GM12878 (cell line): ENCODE measurements at regions of chr3 and their contacts with region 1.

Region 1: GRCh38 chr3:61181874-61182273 is 69.4 kb downstream of the FHIT start:
- DNase-seq: peak; percentile 64
- ATAC-seq: peak; percentile 97
- H3K4me3 ChIP-seq: no peak overlapping the region
- H3K27ac ChIP-seq: no peak overlapping the region; the same call in 1 of the 2 replicates
- H3K4me1 ChIP-seq: peaks cover 20% of the 10 kb centered on the region
- H3K27me3 ChIP-seq: no peaks in the 10 kb centered on the region
- CTCF ChIP-seq: no peak
- EP300 ChIP-seq: peak; percentile 60 to 75; a peak in 3 of 4 replicates
- POLR2A ChIP-seq: no peak
- RAD21 ChIP-seq: no peak

Region 2: DNA sequence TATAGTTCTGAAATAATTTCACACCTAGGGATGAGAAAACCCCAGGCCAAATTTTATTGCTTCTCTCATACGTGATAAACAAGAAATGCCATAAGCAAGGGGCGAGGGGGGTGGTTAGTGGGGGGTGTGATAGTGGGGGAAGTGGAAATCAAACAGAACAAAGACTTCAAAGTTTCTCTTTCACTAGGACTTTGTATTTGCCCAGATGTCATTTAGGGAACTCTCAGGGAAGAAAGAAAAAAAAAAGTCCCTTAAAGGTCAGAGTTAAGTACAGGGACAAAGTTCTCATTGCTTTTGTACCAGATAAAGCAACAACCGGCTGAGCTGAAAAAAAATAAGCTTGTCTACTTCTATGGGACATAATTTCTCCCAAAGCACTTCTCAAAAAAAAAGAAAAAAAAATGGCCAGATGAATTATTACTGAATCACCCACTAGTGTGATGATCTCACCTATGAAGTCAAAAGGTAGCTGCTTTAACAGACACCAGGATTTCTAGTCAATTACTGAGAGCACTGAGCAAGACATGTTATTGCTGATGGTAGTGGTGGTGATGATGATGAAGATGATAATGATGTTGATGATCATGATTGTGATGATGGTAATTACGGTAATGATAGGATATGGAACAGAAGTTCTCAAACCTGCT is 13.1 kb after region 1 on chr3:
- CTCF ChIA-PET with region 1: interaction called, 4 read pairs
- POLR2A ChIA-PET with region 1: interaction called, 5 read pairs
- RAD21 ChIA-PET with region 1: interaction called, 12 read pairs
- SMC1A ChIA-PET with region 1: interaction called, 10 read pairs
- in situ Hi-C with region 1: no loop called
- intact Hi-C with region 1: no loop called
- DNase-seq: no peak
- ATAC-seq: peak; percentile 67
- H3K4me3 ChIP-seq: no peak overlapping the region
- H3K27ac ChIP-seq: no peak overlapping the region
- H3K4me1 ChIP-seq: peaks cover 4% of the 10 kb centered on the region; the same call in 1 of the 2 replicates
- H3K27me3 ChIP-seq: no peaks in the 10 kb centered on the region
- CTCF ChIP-seq: no peak
- EP300 ChIP-seq: no peak
- POLR2A ChIP-seq: no peak
- RAD21 ChIP-seq: no peak

Region 3: DNA sequence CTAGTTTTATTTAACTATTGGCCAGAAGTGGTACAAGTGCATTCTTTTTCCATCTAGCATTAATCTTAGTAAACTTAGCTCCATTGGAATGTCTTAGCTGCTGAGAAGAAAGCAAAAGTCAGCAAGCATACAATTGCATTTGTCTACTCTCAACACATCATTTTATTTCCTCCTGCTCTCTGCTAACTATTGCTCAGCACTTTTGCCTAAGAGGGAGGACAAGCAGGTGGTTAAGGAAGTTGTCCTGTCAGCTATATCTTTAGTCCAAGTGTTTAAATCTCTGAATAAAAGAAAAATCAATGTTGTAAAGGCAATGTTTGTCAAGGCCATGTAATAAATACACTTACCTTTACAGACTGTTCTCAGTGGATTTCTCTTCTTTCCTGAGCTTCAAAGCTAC is 18.4 kb after region 1 on chr3:
- CTCF ChIA-PET with region 1: interaction called, 3 read pairs
- POLR2A ChIA-PET with region 1: interaction called, 5 read pairs
- RAD21 ChIA-PET with region 1: interaction called, 12 read pairs
- SMC1A ChIA-PET with region 1: interaction called, 10 read pairs
- in situ Hi-C with region 1: no loop called
- intact Hi-C with region 1: no loop called
- DNase-seq: no peak
- ATAC-seq: no peak
- H3K4me3 ChIP-seq: no peak overlapping the region
- H3K27ac ChIP-seq: no peak overlapping the region
- H3K4me1 ChIP-seq: peaks cover 6% of the 10 kb centered on the region; the same call in 1 of the 2 replicates
- H3K27me3 ChIP-seq: no peaks in the 10 kb centered on the region
- CTCF ChIP-seq: no peak
- EP300 ChIP-seq: no peak
- POLR2A ChIP-seq: no peak
- RAD21 ChIP-seq: no peak